Activated T-helper 2 cell treated with anti-CD3 and anti-CD28 coated beads, Interferon-gamma antibody, Interleukin-2, Interleukin-4, amounts not matched to agents 10 μg/mL and 5 μg/mL and 100 μg/mL, durations not matched to agents 14 hours and 24 hours and 36 hours (primary cell): ENCODE measurements at regions of chr7 and their contacts with region 1.

Region 1: GRCh38 chr7:150974468-150975391 is 3.4 kb downstream of the KCNH2 start:
- DNase-seq: peak; percentile 66
- H3K4me3 Mint-ChIP-seq: peak overlapping the region; percentile 79
- H3K27ac Mint-ChIP-seq: no peak overlapping the region
- H3K4me1 Mint-ChIP-seq: peaks cover 22% of the 10 kb centered on the region
- H3K27me3 Mint-ChIP-seq: peaks cover 36% of the 10 kb centered on the region

Region 2: GRCh38 chr7:150860291-150860977 is 114.3 kb before region 1 on chr7:
- intact Hi-C with region 1: no loop called
- DNase-seq: no peak
- H3K4me3 Mint-ChIP-seq: no peak overlapping the region
- H3K27ac Mint-ChIP-seq: no peak overlapping the region
- H3K4me1 Mint-ChIP-seq: no peaks in the 10 kb centered on the region
- H3K27me3 Mint-ChIP-seq: peaks cover 3% of the 10 kb centered on the region

Region 3: GRCh38 chr7:151017953-151018420 is 43.3 kb after region 1 on chr7:
- intact Hi-C with region 1: loop called (anchors 5 kb)
- DNase-seq: peak; percentile 70
- H3K4me3 Mint-ChIP-seq: peak overlapping the region; percentile 76
- H3K27ac Mint-ChIP-seq: peak overlapping the region; percentile 42
- H3K4me1 Mint-ChIP-seq: peaks cover 37% of the 10 kb centered on the region
- H3K27me3 Mint-ChIP-seq: peaks cover 31% of the 10 kb centered on the region